Activated CD4-positive, alpha-beta T cell treated with anti-CD3 and anti-CD28 coated beads, Interleukin-2, amount 10 ng/mL, durations not matched to agents 24 days and 14 days (primary cell): ENCODE measurements at regions of chr6 and their contacts with region 1.

Region 1: DNA sequence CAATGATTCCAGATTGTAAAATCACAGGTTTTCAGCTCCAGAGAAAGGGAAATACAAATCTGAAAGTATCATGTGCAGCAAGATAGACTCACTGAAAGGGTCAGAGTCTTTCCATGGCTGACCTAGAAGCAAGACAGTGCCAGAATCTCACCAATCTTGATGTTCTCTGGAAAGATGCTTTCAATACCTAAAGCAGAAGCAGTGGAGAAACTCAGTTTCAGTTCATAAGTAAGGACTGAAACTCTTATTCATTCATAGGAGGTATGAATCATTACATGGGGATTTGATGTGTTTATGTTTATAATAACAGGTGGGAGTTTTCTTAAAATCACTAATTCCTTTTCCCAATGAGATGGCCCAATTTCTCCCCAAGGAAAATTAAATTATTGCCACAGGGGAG is 42.5 kb downstream of the SLC2A12 start:
- DNase-seq: no peak
- H3K4me3 Mint-ChIP-seq: no peak overlapping the region
- H3K27ac Mint-ChIP-seq: no peak overlapping the region
- H3K4me1 Mint-ChIP-seq: peaks cover 13% of the 10 kb centered on the region
- H3K27me3 Mint-ChIP-seq: peaks cover 12% of the 10 kb centered on the region

Region 2: DNA sequence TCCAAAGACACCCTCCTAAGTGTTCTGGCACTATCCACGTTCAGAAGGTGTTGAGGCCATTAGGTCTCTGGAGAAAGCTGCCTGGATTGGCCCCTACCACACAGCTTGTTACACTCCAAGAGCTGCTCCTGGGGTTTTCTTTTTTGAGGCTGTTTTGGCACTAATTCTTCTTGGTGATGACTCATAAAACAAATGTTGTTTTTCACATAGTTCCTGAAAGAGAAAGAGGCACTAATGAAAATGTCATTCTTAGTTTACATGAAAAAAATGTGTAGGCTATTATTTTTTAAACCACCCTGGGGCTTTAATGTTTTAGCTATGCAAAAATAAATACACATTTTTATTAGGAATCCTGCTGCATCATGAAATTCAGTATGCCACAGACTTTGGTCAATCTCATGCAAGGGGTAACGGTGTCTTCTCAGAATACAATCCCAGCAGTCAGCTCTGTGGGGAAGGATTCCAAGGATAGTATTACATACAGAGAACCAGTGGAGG is 18.7 kb before region 1 on chr6:
- intact Hi-C with region 1: loop called (anchors 2 kb)
- DNase-seq: no peak
- H3K4me3 Mint-ChIP-seq: no peak overlapping the region
- H3K27ac Mint-ChIP-seq: no peak overlapping the region
- H3K4me1 Mint-ChIP-seq: peaks cover 7% of the 10 kb centered on the region
- H3K27me3 Mint-ChIP-seq: no peaks in the 10 kb centered on the region

Region 3: GRCh38 chr6:134047673-134048072 is 37.8 kb after region 1 on chr6:
- intact Hi-C with region 1: loop called (anchors 5 kb)
- DNase-seq: no peak
- H3K4me3 Mint-ChIP-seq: no peak overlapping the region
- H3K27ac Mint-ChIP-seq: no peak overlapping the region
- H3K4me1 Mint-ChIP-seq: peaks cover 10% of the 10 kb centered on the region
- H3K27me3 Mint-ChIP-seq: peaks cover 13% of the 10 kb centered on the region